A549 (cell line): ENCODE measurements at regions of chr1 and their contacts with region 1.

Region 1: GRCh38 chr1:58848818-58849411 is 65.1 kb upstream of the JUN start:
- DNase-seq: peak; percentile 72 to 94
- ATAC-seq: peak; percentile 99
- H3K4me3 ChIP-seq: no peak overlapping the region
- H3K27ac ChIP-seq: peak overlapping the region; percentile 89 to 95
- H3K4me1 ChIP-seq: peaks cover 47% of the 10 kb centered on the region
- CTCF ChIP-seq: no peak
- EP300 ChIP-seq: peak; percentile 90 to 94; a peak in 4 of 5 replicates
- POLR2A ChIP-seq: no peak
- RAD21 ChIP-seq: peak; percentile 25 to 69; a peak in 4 of 5 replicates

Region 2: DNA sequence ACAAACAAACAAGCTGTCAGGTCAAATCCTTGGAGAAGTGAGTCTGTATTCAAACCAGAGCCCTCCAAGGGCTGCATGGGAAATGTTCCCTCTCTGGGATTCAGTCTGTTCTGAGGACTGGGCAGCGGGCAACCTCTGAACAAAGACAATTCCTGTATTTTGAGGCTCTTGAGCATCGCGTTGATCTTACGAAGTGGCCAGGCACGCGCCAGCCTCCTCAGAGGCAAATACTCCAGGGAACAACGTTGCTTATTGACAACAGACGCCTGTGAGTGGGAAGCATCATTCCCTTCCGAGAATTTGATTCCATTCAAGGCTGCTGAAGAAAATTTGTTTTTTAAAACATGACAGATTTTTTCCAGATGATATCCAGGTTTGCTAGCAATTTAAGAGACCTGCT is 251.8 kb before region 1 on chr1:
- CTCF ChIA-PET with region 1: no interaction called
- POLR2A ChIA-PET with region 1: no interaction called
- DNase-seq: no peak
- ATAC-seq: no peak
- H3K4me3 ChIP-seq: no peak overlapping the region
- H3K27ac ChIP-seq: no peak overlapping the region
- H3K4me1 ChIP-seq: peaks cover 11% of the 10 kb centered on the region; the same call in 2 of the 3 replicates
- CTCF ChIP-seq: no peak
- EP300 ChIP-seq: no peak
- POLR2A ChIP-seq: no peak
- RAD21 ChIP-seq: no peak

Region 3: GRCh38 chr1:58652651-58653184 is 196.2 kb before region 1 on chr1:
- CTCF ChIA-PET with region 1: no interaction called
- POLR2A ChIA-PET with region 1: no interaction called
- DNase-seq: peak; percentile 55 to 68
- ATAC-seq: peak; percentile 86 to 95
- H3K4me3 ChIP-seq: no peak overlapping the region
- H3K27ac ChIP-seq: no peak overlapping the region
- H3K4me1 ChIP-seq: no peaks in the 10 kb centered on the region
- CTCF ChIP-seq: peak; percentile 77
- EP300 ChIP-seq: no peak
- POLR2A ChIP-seq: no peak
- RAD21 ChIP-seq: peak; percentile 79

Region 4: DNA sequence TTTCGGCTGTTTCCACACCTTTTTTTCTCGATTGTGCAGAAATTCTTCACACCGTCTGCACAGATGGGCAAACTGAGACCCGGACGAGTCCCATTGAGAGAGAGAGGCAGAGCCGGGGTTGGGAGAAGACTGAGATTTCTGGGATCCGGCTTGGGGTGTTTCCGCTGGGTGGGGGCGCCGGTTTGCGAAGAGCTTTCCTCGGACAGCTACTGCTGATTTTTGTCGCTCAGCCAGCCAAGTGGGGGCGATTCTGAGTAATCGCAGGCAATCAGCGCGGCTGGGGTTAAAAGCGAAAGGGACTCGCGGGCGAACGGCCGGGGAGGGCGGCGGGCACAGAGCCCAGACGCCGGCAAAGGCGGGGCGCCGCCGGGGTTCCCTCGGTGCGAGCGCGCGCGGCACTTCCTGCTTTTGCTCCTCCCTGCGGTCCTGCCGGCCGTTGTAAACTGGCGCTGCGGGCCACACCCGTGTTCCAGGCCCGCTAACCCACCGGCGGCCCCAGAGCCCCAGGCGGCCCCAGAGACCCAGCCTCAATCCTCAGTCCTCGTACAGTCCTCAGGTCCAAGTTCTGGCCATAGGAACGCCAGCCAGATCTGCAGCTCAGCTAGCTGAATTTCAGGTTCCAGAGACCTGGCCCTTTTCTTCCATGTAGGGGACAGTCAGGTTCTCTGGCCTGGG is 32.7 kb before region 1 on chr1:
- CTCF ChIA-PET with region 1: interaction called, 4 read pairs
- POLR2A ChIA-PET with region 1: interaction called, 11 read pairs
- DNase-seq: peak; percentile 66 to 83
- ATAC-seq: peak; percentile 77 to 85
- H3K4me3 ChIP-seq: peak overlapping the region; percentile 64
- H3K27ac ChIP-seq: peak overlapping the region; percentile 100
- H3K4me1 ChIP-seq: peaks cover 41% of the 10 kb centered on the region
- CTCF ChIP-seq: no peak; the same call in 2 of the 3 replicates
- EP300 ChIP-seq: peak; percentile 21 to 57; a peak in 2 of 5 replicates
- POLR2A ChIP-seq: peak; percentile 22; the same call in 1 of the 2 replicates
- RAD21 ChIP-seq: peak; percentile 2 to 58

Region 5: GRCh38 chr1:58922302-58923089 is 73.6 kb after region 1 on chr1:
- CTCF ChIA-PET with region 1: no interaction called
- POLR2A ChIA-PET with region 1: no interaction called
- DNase-seq: no peak
- ATAC-seq: no peak; a peak in 2 of 6 replicates
- H3K4me3 ChIP-seq: no peak overlapping the region
- H3K27ac ChIP-seq: peak overlapping the region; percentile 17 to 31; a peak in 1 of 6 replicates
- H3K4me1 ChIP-seq: peaks cover 9% of the 10 kb centered on the region; the same call in 2 of the 3 replicates
- CTCF ChIP-seq: no peak
- EP300 ChIP-seq: no peak
- POLR2A ChIP-seq: no peak
- RAD21 ChIP-seq: no peak